Psoas muscle (tissue), 8 donors: ENCODE measurements at regions of chr19 and their contacts with region 1.

Region 1: DNA sequence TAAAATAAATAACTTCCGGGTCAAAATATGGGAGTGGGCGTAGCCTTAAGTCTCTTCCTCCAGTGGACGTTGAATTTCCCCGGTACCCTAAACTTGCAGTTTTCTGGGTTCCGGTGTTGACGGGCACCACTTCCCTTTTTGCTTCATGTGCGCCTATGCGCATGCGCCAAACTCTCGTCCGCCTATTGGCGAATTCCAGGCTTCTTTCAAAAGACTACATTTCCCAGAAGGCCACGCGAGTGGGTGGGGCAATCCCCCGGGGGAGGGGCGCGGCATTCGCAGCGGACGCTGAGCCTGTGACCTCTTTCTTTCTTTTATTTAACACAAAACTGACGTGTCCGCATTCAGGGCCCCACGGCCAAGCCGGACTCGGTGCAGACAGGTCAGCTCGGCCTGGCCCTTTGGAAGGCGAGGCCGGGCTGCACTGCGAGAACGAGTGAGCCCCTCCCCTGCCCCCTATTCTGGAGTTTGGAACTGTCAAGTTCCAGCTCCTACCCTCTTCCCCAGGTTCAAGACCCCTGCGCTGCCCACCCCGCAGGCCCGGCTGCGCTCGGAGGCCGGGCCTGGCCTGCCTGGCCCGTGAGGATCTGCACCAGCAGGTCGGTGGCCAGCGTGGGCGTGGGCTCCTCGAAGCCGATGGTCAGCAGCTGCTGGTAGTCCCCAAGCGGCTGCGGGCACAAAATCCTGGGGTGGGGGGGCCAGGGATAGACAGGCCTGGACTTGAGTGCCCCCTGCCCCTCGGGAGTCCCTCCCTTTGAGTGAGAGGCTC is 4.1 kb downstream of the C19orf67 start:
- DNase-seq: peak; percentile 99 to 100
- ATAC-seq: peak; percentile 93 to 96 (median 94)
- H3K4me3 ChIP-seq: peak overlapping the region; percentile 86
- H3K27ac ChIP-seq: peak overlapping the region; percentile 92
- H3K4me1 ChIP-seq: peaks cover 13% of the 10 kb centered on the region
- H3K27me3 ChIP-seq: no peaks in the 10 kb centered on the region
- CTCF ChIP-seq: no peak

Region 2: GRCh38 chr19:13952154-13953035 is 129.1 kb before region 1 on chr19 and contains the start of gene DCAF15:
- intact Hi-C with region 1: no loop called
- DNase-seq: peak; percentile 99 to 100
- ATAC-seq: peak; percentile 97 to 100 (median 98)
- H3K4me3 ChIP-seq: peak within 1 kb of the TSS; percentile 80
- H3K27ac ChIP-seq: peak within 1 kb of the TSS; percentile 85
- H3K4me1 ChIP-seq: peaks cover 10% of the 10 kb centered on the region
- H3K27me3 ChIP-seq: no peaks in the 10 kb centered on the region
- CTCF ChIP-seq: no peak
- total RNA-seq, gene DCAF15: 9.2 to 25.3 (median 16.0) TPM

Region 3: GRCh38 chr19:14117668-14118164 is 36.2 kb after region 1 on chr19 and contains the start of gene PRKACA:
- intact Hi-C with region 1: loop called in 1 of 2 experiments (anchors 5 kb)
- DNase-seq: peak; percentile 100
- ATAC-seq: peak; percentile 72 to 86 (median 78)
- H3K4me3 ChIP-seq: peak within 1 kb of the TSS; percentile 90
- H3K27ac ChIP-seq: peak within 1 kb of the TSS; percentile 100
- H3K4me1 ChIP-seq: peaks cover 59% of the 10 kb centered on the region
- H3K27me3 ChIP-seq: no peaks in the 10 kb centered on the region
- CTCF ChIP-seq: no peak
- total RNA-seq, gene PRKACA: 209 to 509 (median 312) TPM